ENCODE measurements at regions of chr22 and their contacts with region 1.

Region 1: DNA sequence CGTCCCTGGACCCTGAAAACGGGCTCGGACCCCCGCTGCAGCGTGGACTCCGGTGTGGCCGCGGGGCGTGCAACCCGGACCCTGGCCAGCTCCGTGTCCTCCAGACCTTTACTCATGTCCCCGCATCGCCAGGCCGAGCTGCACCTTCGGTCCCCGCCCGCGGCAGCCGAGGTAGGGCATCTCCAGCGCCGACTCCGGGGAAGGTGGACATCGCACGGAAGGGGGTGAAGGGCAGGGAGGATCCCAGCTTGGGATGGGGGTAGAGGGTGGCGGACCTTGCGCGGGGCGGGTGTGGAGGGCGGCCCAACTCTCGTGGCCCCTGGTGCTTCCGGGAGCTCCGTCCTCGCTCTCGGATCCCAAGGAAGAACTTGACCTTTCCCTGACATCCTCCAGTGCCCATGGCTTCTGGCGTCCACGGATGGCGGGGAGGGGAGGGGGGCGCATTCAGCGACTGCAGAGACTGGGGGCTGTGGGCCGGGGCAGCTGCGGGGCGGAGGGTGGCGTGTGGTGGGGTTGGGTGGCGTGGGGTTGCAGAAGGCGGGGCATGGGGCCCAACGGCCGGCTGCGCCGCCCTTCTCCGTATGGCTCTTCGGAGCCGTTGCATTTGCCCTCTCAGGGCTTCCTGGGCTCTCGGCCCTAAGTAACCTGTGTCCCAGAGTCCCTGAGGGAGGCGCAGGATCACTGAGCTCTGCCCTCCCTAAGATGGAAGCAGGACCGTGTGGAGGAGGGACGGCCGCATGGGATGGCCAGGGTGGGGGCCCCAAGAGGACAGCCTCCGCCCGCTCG is 9.5 kb upstream of the AIFM3 start:
- DNase-seq: peak; percentile 66 to 78
- H3K4me3 ChIP-seq: peak overlapping the region; percentile 77
- H3K4me3 Mint-ChIP-seq: peak overlapping the region; percentile 82
- H3K27ac Mint-ChIP-seq: peak overlapping the region; percentile 59
- H3K4me1 ChIP-seq: peaks cover 36% of the 10 kb centered on the region
- H3K4me1 Mint-ChIP-seq: no peaks in the 10 kb centered on the region
- H3K27me3 ChIP-seq: no peaks in the 10 kb centered on the region
- H3K27me3 Mint-ChIP-seq: no peaks in the 10 kb centered on the region
- CTCF ChIP-seq: no peak

Region 2: GRCh38 chr22:20858615-20859416 is 98.7 kb before region 1 on chr22 and contains the starts of genes PI4KA and SNAP29:
- CTCF ChIA-PET with region 1: no interaction called
- POLR2A ChIA-PET with region 1: no interaction called
- intact Hi-C with region 1: loop called (anchors 5 kb)
- DNase-seq: peak; percentile 99
- H3K4me3 ChIP-seq: peak within 1 kb of the TSS; percentile 88
- H3K4me3 Mint-ChIP-seq: peak within 1 kb of the TSS; percentile 82
- H3K27ac Mint-ChIP-seq: peak within 1 kb of the TSS; percentile 73
- H3K4me1 ChIP-seq: peaks cover 15% of the 10 kb centered on the region
- H3K4me1 Mint-ChIP-seq: peaks cover 21% of the 10 kb centered on the region
- H3K27me3 ChIP-seq: no peaks in the 10 kb centered on the region
- H3K27me3 Mint-ChIP-seq: no peaks in the 10 kb centered on the region
- CTCF ChIP-seq: no peak
- total RNA-seq, gene PI4KA: 66.9 and 67.2 TPM in 2 replicates
- total RNA-seq, gene SNAP29: 26.2 and 26.8 TPM in 2 replicates

Region 3: GRCh38 chr22:20873214-20873613 is 84.3 kb before region 1 on chr22:
- CTCF ChIA-PET with region 1: no interaction called
- POLR2A ChIA-PET with region 1: no interaction called
- intact Hi-C with region 1: no loop called
- DNase-seq: no peak
- H3K4me3 ChIP-seq: no peak overlapping the region
- H3K4me3 Mint-ChIP-seq: no peak overlapping the region
- H3K27ac Mint-ChIP-seq: no peak overlapping the region
- H3K4me1 ChIP-seq: no peaks in the 10 kb centered on the region
- H3K4me1 Mint-ChIP-seq: no peaks in the 10 kb centered on the region
- H3K27me3 ChIP-seq: no peaks in the 10 kb centered on the region
- H3K27me3 Mint-ChIP-seq: no peaks in the 10 kb centered on the region
- CTCF ChIP-seq: no peak

Region 4: DNA sequence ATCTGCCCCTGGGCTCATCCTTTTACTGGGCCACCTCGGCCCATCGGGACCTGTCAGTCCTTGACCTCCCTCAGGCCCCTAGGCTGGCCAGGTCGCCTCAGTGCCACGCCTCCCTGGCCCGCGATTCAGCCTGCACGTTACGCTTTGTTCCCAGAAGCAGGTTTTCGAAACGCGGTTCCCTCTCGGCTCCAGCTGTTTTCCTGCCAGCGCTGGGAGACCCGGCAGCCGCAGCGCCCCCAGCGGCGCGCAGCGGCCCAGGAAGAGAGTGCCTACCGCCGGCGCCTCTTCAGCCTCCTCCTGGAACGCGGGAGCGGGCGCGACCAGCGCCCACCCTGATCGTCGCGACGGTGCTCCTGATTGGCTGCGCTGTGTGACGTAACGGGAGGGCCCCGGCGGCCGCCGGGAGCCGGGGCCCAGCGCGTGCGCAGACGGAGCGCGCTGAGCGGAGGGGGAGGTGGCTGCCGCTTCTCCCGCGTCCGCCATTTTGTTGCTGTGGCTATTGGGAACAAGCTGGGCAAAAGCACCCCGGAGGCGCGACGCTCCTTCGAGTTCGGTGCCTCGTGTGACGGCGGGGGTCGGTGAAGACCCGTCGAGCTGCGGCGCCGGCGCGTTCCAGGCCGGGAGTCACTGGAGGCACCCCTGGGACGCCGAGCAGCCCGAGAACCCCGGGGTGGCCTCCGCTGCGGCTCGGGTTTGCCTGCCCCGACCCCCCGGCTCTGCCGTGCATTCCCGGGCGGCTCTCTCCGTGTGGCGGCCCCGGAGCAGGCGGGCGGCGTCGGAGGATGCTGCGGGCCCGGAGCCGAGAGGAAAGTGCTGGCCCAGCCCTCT is 40.3 kb before region 1 on chr22 and contains the start of gene CRKL:
- CTCF ChIA-PET with region 1: interaction called, 14 read pairs
- POLR2A ChIA-PET with region 1: interaction called, 3 read pairs
- intact Hi-C with region 1: loop called (anchors 2 kb)
- DNase-seq: peak; percentile 96 to 97
- H3K4me3 ChIP-seq: peak within 1 kb of the TSS; percentile 87
- H3K4me3 Mint-ChIP-seq: peak within 1 kb of the TSS; percentile 82
- H3K27ac Mint-ChIP-seq: peak within 1 kb of the TSS; percentile 82
- H3K4me1 ChIP-seq: peaks cover 24% of the 10 kb centered on the region
- H3K4me1 Mint-ChIP-seq: peaks cover 33% of the 10 kb centered on the region
- H3K27me3 ChIP-seq: no peaks in the 10 kb centered on the region
- H3K27me3 Mint-ChIP-seq: no peaks in the 10 kb centered on the region
- CTCF ChIP-seq: peak; percentile 81 to 96
- total RNA-seq, gene CRKL: 76.0 and 82.7 TPM in 2 replicates

Region 5: DNA sequence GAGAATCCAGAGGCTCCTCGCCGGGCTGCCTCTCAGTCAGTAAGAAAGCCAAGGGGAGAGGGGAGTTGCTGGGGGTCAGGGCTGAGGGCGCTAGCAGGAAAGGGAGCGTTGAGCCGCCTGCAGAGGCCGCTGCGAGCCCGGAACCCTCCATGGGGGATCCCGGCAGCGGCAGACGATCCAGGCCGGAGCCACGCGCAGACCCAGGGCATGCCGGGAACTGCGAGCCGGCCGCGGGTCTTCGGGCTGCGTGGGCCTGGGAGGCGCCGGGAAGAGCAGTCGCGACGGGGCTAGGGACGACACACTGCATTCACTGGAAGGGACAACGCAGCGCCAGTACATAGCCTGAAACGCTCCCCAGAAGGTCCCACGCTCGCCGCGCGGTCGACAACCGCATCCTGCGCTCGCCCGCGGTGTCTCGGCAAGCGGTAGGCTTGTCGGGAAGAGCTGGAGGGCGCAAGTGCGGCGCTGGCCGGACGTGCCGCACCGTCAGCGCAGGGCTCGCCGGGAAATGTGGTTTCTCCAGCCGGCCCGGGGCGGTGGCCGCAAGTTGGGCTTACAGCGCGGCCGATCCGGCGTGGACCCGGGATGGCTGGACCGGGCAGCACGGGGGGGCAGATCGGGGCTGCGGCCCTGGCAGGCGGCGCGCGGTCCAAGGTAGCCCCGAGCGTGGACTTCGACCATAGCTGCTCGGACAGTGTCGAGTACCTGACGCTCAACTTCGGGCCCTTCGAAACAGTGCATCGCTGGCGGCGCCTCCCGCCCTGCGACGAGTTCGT is 24.5 kb after region 1 on chr22 and contains the start of gene LZTR1:
- CTCF ChIA-PET with region 1: interaction called, 12 read pairs
- POLR2A ChIA-PET with region 1: interaction called, 11 read pairs
- intact Hi-C with region 1: no loop called
- DNase-seq: peak; percentile 78 to 88
- H3K4me3 ChIP-seq: peak within 1 kb of the TSS; percentile 95
- H3K4me3 Mint-ChIP-seq: peak within 1 kb of the TSS; percentile 85
- H3K27ac Mint-ChIP-seq: peak within 1 kb of the TSS; percentile 71
- H3K4me1 ChIP-seq: peaks cover 14% of the 10 kb centered on the region; the same call in 1 of the 2 replicates
- H3K4me1 Mint-ChIP-seq: no peaks in the 10 kb centered on the region
- H3K27me3 ChIP-seq: no peaks in the 10 kb centered on the region
- H3K27me3 Mint-ChIP-seq: no peaks in the 10 kb centered on the region
- CTCF ChIP-seq: peak; percentile 51 to 84
- total RNA-seq, gene LZTR1: 37.2 and 41.3 TPM in 2 replicates

Region 6: DNA sequence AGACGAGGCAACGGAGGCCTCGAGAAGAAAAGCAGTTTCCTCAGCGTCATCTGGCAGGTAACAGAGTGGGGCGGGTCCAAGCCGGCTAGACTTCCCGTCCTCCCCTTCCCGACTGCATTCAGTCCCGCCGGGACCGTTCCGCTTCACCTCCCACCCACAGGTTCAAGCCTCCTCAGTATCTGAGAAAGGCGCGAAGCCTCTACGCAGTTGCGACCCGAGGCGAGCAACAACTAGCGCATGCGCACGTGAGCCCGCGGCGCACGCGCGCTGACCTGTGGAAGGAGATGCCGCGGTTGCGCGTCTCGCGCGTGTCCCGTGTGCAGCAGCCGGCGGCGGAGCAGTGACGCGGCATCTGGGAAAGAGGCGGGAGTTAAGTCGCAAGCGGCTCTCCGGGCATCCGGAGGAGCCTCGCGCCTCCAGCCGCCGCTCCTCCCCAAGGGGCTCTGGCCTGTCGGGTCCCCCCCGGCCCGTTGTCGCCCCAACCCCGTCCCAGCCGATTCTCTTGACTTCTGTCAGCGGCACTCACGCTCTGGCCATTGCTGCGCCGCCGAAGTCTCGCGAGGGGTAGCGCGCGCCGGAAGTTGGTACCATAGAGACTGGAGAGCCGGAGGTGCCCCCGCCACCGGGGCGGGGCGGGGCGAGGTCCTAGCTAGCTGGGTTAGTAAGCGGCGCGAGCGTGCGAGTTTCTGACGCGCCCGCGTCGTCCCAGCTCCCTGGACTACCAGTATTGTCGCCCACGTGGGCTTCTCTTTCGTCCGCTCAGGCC is 44.2 kb after region 1 on chr22 and contains the start of gene THAP7:
- CTCF ChIA-PET with region 1: no interaction called
- POLR2A ChIA-PET with region 1: interaction called, 4 read pairs
- intact Hi-C with region 1: loop called (anchors 2 kb)
- DNase-seq: peak; percentile 96
- H3K4me3 ChIP-seq: peak within 1 kb of the TSS; percentile 43
- H3K4me3 Mint-ChIP-seq: peak within 1 kb of the TSS; percentile 98
- H3K27ac Mint-ChIP-seq: peak within 1 kb of the TSS; percentile 98
- H3K4me1 ChIP-seq: peaks cover 9% of the 10 kb centered on the region
- H3K4me1 Mint-ChIP-seq: peaks cover 10% of the 10 kb centered on the region
- H3K27me3 ChIP-seq: no peaks in the 10 kb centered on the region
- H3K27me3 Mint-ChIP-seq: no peaks in the 10 kb centered on the region
- CTCF ChIP-seq: no peak
- total RNA-seq, gene THAP7: 29.1 and 30.6 TPM in 2 replicates

Measured in Caco-2 (cell line).